PC-9 (cell line): ENCODE measurements at regions of chr22 and their contacts with region 1.

Region 1: GRCh38 chr22:46563381-46564083 is 26.1 kb upstream of the CELSR1 start:
- DNase-seq: peak; percentile 61 to 70
- H3K4me3 ChIP-seq: peak overlapping the region; percentile 14; the same call in 1 of the 2 replicates
- H3K27ac ChIP-seq: 0 out of 2 replicates have a peak overlapping the region, but pooled peaks have one; percentile 2
- H3K4me1 ChIP-seq: peaks cover 20% of the 10 kb centered on the region
- H3K27me3 ChIP-seq: no peaks in the 10 kb centered on the region
- CTCF ChIP-seq: peak; percentile 94

Region 2: DNA sequence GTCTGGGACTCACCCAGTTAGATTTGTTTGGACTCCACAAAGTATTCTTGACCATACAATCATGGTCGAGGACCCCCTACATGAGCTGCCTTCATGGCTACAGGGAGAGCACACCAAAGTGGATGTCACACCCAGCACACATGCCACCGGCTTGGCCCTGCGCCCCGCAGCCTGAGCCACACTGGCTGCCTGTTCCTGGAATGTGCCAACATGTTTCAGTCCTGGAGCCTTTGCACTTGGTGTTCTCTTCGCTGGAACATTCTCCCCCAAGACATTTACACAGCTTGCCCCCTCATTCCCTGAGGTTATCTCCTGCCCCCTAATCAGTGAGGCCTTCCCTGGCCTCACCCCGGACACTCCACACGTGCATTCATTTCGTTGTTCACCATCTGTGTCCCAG is 367.3 kb before region 1 on chr22:
- CTCF ChIA-PET with region 1: no interaction called
- POLR2A ChIA-PET with region 1: no interaction called
- intact Hi-C with region 1: no loop called
- DNase-seq: no peak
- H3K4me3 ChIP-seq: no peak overlapping the region
- H3K27ac ChIP-seq: no peak overlapping the region
- H3K4me1 ChIP-seq: peaks cover 8% of the 10 kb centered on the region; the same call in 1 of the 2 replicates
- H3K27me3 ChIP-seq: no peaks in the 10 kb centered on the region
- CTCF ChIP-seq: no peak

Region 3: DNA sequence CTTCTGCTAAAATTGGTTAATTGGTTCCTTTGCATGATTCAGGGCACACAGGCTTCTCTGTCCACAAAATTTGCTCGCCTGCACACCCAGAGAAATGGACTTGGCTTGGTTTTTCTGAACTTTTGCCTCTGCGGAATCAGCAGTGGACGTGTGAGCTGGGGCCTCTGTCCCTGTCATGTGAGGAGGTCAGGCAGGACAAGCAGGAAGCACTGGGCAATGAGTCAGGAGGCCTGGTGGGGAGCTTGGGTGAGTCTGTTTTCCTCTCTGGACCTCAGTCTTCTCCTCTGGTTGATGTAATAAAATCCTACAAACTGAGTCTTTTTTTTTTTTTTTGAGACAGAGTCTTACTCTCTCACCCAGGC is 15.7 kb before region 1 on chr22:
- CTCF ChIA-PET with region 1: interaction called, 13 read pairs
- POLR2A ChIA-PET with region 1: no interaction called
- intact Hi-C with region 1: loop called (anchors 2 kb)
- DNase-seq: peak; percentile 68 to 89
- H3K4me3 ChIP-seq: no peak overlapping the region
- H3K27ac ChIP-seq: peak overlapping the region; percentile 72
- H3K4me1 ChIP-seq: peaks cover 45% of the 10 kb centered on the region
- H3K27me3 ChIP-seq: no peaks in the 10 kb centered on the region
- CTCF ChIP-seq: no peak

Region 4: GRCh38 chr22:46661221-46661851 is 97.8 kb after region 1 on chr22:
- CTCF ChIA-PET with region 1: no interaction called
- POLR2A ChIA-PET with region 1: no interaction called
- intact Hi-C with region 1: loop called (anchors 10 kb)
- DNase-seq: peak in 1 of 2 experiments; percentile 39
- H3K4me3 ChIP-seq: no peak overlapping the region
- H3K27ac ChIP-seq: no peak overlapping the region
- H3K4me1 ChIP-seq: no peaks in the 10 kb centered on the region
- H3K27me3 ChIP-seq: no peaks in the 10 kb centered on the region
- CTCF ChIP-seq: no peak

Region 5: GRCh38 chr22:46774253-46774979 is 210.9 kb after region 1 on chr22:
- CTCF ChIA-PET with region 1: no interaction called
- POLR2A ChIA-PET with region 1: no interaction called
- intact Hi-C with region 1: loop called (anchors 5 kb)
- DNase-seq: no peak
- H3K4me3 ChIP-seq: peak overlapping the region; percentile 36; the same call in 1 of the 2 replicates
- H3K27ac ChIP-seq: peak overlapping the region; percentile 67
- H3K4me1 ChIP-seq: peaks cover 28% of the 10 kb centered on the region
- H3K27me3 ChIP-seq: no peaks in the 10 kb centered on the region
- CTCF ChIP-seq: no peak; the same call in 1 of the 2 replicates